MCF 10A (cell line): ENCODE measurements at regions of chr12 and their contacts with region 1.

Region 1: DNA sequence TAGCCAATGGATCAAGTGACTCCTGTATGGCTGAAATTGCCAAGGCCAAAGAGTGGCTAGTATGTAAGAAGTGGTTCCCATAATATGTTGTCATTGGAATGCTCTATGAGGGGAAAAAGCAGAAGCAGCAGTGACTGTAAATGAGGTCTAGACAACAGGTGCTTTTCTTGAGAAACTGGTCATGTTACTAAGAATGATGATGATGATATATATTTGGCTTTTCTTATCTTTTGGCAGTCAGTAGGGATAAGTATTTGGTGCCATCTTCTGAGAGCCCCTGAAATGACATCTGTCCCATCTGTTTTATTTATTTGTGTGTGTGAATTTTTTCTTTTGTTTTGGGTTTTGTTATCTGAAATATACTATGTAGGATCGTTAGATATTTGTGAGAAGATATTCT is 141.7 kb downstream of the SYT1 start:
- DNase-seq: peak; percentile 22
- H3K4me3 Mint-ChIP-seq: no peak overlapping the region
- H3K27ac Mint-ChIP-seq: no peak overlapping the region
- H3K4me1 Mint-ChIP-seq: no peaks in the 10 kb centered on the region
- H3K27me3 Mint-ChIP-seq: no peaks in the 10 kb centered on the region
- CTCF ChIP-seq: peak; percentile 49

Region 2: DNA sequence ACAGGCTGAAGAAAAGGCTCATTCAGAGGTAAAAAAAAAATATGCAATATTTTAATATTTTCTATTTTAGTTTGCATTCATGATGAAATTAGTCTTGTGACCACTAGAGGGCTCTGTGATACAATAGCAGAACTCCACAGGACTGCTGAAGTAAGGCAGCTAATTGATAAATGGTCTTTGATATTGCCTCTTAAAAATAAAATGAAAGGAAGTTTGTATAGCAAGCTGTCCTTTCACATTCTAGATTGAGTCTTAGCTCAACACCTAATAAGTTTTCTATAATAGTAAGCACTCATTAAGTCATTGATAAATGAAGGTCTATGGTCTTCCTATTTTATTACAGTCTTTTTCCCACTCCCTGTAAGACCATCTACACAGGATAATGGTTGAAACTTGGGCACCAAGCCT is 859.9 kb before region 1 on chr12:
- CTCF ChIA-PET with region 1: interaction called, 5 read pairs
- POLR2A ChIA-PET with region 1: no interaction called
- intact Hi-C with region 1: loop called (anchors 1 kb)
- DNase-seq: peak; percentile 47
- H3K4me3 Mint-ChIP-seq: no peak overlapping the region
- H3K27ac Mint-ChIP-seq: no peak overlapping the region
- H3K4me1 Mint-ChIP-seq: no peaks in the 10 kb centered on the region
- H3K27me3 Mint-ChIP-seq: no peaks in the 10 kb centered on the region
- CTCF ChIP-seq: peak; percentile 62

Region 3: GRCh38 chr12:78181544-78182162 is 824.7 kb before region 1 on chr12:
- CTCF ChIA-PET with region 1: interaction called, 16 read pairs
- POLR2A ChIA-PET with region 1: no interaction called
- intact Hi-C with region 1: loop called (anchors 1 kb)
- DNase-seq: peak; percentile 52
- H3K4me3 Mint-ChIP-seq: no peak overlapping the region
- H3K27ac Mint-ChIP-seq: no peak overlapping the region
- H3K4me1 Mint-ChIP-seq: peaks cover 7% of the 10 kb centered on the region
- H3K27me3 Mint-ChIP-seq: no peaks in the 10 kb centered on the region
- CTCF ChIP-seq: peak; percentile 75

Region 4: GRCh38 chr12:78392918-78393317 is 613.4 kb before region 1 on chr12:
- CTCF ChIA-PET with region 1: interaction called, 11 read pairs
- POLR2A ChIA-PET with region 1: no interaction called
- intact Hi-C with region 1: loop called (anchors 1 kb)
- DNase-seq: peak; percentile 38
- H3K4me3 Mint-ChIP-seq: no peak overlapping the region
- H3K27ac Mint-ChIP-seq: no peak overlapping the region
- H3K4me1 Mint-ChIP-seq: no peaks in the 10 kb centered on the region
- H3K27me3 Mint-ChIP-seq: no peaks in the 10 kb centered on the region
- CTCF ChIP-seq: peak; percentile 19

Region 5: DNA sequence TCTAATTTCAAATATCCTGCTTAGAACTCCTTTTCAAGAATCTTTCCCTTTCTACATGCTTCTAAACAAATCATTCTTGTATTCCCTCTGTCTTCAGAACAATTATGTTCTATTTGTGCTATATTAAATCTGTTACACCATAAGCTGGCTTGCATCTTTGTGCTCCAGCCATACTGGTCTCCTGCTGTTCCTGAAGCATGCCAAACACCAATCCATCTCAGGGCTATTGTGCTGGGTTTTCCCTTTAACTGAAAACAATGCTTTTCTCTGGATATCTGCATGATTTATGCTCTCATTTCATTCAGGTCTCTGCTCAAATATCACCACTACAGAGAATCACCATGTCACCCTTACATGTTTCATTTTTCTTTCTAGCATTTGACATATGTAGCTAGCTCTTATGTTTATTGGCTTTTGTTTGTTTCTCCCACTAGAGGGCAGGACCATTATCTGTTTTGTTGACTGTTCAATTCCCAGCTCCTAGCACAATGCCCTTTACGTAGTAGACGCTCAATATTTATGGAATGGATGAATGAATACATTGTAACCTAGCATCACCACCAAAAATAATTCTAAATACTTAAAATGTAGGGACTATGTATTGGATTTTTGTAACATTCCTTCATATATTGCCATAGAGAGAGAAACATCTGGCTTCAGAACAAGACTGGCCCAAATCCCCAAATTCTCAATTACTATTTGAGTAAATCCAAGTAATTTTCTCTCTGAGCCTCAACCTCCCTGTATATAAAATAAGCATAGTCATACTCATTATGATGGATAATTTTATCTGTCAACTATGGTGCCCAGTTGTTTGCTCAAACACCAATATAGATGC is 443.7 kb before region 1 on chr12:
- CTCF ChIA-PET with region 1: interaction called, 8 read pairs
- POLR2A ChIA-PET with region 1: no interaction called
- intact Hi-C with region 1: loop called (anchors 1 kb)
- DNase-seq: peak; percentile 47
- H3K4me3 Mint-ChIP-seq: no peak overlapping the region
- H3K27ac Mint-ChIP-seq: no peak overlapping the region
- H3K4me1 Mint-ChIP-seq: peaks cover 6% of the 10 kb centered on the region
- H3K27me3 Mint-ChIP-seq: no peaks in the 10 kb centered on the region
- CTCF ChIP-seq: peak; percentile 32

Region 6: GRCh38 chr12:78863482-78864402 is 142.6 kb before region 1 on chr12:
- CTCF ChIA-PET with region 1: interaction called, 6 read pairs
- POLR2A ChIA-PET with region 1: no interaction called
- intact Hi-C with region 1: loop called (anchors 1 kb)
- DNase-seq: peak; percentile 72
- H3K4me3 Mint-ChIP-seq: peak overlapping the region; percentile 96
- H3K27ac Mint-ChIP-seq: peak overlapping the region; percentile 85
- H3K4me1 Mint-ChIP-seq: peaks cover 8% of the 10 kb centered on the region
- H3K27me3 Mint-ChIP-seq: no peaks in the 10 kb centered on the region
- CTCF ChIP-seq: no peak

Region 7: DNA sequence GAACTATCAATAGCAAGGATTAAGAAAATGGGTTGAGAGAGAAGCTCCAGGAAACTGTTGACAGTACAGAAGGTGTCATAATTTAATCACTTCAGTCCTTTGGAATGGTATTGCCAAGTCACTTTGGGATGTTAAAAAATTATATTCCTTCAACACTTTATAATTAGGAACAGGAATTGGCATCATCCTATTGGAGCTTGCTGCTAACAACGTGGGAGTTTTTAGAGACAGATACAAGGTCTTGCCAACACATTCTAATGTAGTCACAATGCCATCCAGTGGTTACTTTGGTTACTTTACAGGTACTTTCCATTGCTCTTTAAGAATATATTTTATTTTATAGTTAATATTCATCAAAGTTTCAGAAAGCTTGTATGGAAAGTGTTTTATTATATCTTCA is 168.3 kb after region 1 on chr12:
- CTCF ChIA-PET with region 1: interaction called, 10 read pairs
- POLR2A ChIA-PET with region 1: no interaction called
- intact Hi-C with region 1: loop called (anchors 5 kb)
- DNase-seq: peak; percentile 50
- H3K4me3 Mint-ChIP-seq: no peak overlapping the region
- H3K27ac Mint-ChIP-seq: no peak overlapping the region
- H3K4me1 Mint-ChIP-seq: no peaks in the 10 kb centered on the region
- H3K27me3 Mint-ChIP-seq: no peaks in the 10 kb centered on the region
- CTCF ChIP-seq: peak; percentile 49